ENCODE measurements at regions of chr1 and their contacts with region 1.

Region 1: DNA sequence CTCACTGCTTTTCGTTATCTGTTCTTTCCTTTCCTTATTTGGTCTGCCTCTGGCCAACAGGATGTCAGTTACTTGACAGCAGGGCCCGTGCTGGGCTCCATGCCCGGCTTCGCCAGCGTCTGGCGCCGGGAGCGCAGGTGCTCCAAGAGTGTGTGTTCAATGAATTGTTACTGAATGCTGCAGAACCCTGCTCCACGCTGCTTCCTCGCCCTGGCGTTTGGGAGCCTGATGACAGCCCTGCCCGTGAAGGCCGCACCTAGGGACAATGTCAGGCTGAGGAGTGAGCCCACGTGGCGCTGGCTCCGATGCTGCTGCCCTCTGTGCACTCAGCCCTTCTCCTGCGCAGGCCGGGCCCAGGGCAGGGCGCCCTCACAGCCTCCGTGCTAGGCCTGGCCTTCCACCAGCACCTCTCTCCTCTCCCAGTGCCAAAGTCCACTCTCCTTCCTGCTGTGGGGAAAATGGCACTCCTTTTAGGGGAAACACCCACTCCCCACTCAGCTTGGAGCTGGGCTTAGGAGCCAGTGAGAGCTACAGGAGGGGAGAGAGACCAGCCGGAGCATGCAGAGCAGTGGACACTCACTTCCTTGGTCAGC is 51.4 kb downstream of the ACBD3 start:
- DNase-seq: no peak
- ATAC-seq: peak in 1 of 2 donors; percentile 27
- H3K4me3 ChIP-seq: no peak overlapping the region
- H3K27ac ChIP-seq: no peak overlapping the region
- H3K4me1 ChIP-seq: no peaks in the 10 kb centered on the region
- H3K27me3 ChIP-seq: peaks cover 0 to 3% (median 0%) of the 10 kb centered on the region in 3 donors
- CTCF ChIP-seq: no peak
- POLR2A ChIP-seq: no peak

Region 2: DNA sequence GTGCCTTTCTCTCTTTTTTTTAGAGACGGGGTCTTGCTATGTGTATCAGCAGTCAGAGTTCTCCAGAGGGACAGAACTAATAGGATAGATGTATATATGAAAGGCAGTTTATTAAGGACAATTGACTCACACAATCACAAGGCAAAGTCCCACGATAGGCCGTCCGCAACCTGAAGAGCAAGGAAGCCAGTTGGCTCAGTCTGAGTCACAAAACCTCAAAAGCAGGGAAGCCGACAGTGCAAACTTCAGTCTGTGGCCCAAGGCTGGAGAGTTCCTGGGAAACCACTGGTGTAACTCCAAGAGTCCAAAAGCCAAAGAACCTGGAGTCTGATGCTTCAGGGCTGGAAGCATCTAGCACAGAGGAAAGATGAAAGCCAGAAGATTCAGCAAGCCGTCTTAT is 88.9 kb before region 1 on chr1:
- in situ Hi-C with region 1: no loop called
- intact Hi-C with region 1: no loop called
- DNase-seq: no peak
- ATAC-seq: no peak
- H3K4me3 ChIP-seq: no peak overlapping the region
- H3K27ac ChIP-seq: no peak overlapping the region
- H3K4me1 ChIP-seq: no peaks in the 10 kb centered on the region
- H3K27me3 ChIP-seq: no peaks in the 10 kb centered on the region
- CTCF ChIP-seq: no peak
- POLR2A ChIP-seq: no peak

Region 3: GRCh38 chr1:226195144-226195543 is 60.0 kb after region 1 on chr1:
- in situ Hi-C with region 1: loop called in 1 of 4 experiments (anchors 10 kb)
- intact Hi-C with region 1: no loop called
- DNase-seq: no peak
- ATAC-seq: no peak
- H3K4me3 ChIP-seq: no peak overlapping the region
- H3K27ac ChIP-seq: no peak overlapping the region
- H3K4me1 ChIP-seq: no peaks in the 10 kb centered on the region
- H3K27me3 ChIP-seq: no peaks in the 10 kb centered on the region
- CTCF ChIP-seq: no peak
- POLR2A ChIP-seq: no peak

Measured in gastrocnemius medialis (tissue), 4 donors.